ENCODE measurements at regions of chr4 and their contacts with region 1.

Region 1: DNA sequence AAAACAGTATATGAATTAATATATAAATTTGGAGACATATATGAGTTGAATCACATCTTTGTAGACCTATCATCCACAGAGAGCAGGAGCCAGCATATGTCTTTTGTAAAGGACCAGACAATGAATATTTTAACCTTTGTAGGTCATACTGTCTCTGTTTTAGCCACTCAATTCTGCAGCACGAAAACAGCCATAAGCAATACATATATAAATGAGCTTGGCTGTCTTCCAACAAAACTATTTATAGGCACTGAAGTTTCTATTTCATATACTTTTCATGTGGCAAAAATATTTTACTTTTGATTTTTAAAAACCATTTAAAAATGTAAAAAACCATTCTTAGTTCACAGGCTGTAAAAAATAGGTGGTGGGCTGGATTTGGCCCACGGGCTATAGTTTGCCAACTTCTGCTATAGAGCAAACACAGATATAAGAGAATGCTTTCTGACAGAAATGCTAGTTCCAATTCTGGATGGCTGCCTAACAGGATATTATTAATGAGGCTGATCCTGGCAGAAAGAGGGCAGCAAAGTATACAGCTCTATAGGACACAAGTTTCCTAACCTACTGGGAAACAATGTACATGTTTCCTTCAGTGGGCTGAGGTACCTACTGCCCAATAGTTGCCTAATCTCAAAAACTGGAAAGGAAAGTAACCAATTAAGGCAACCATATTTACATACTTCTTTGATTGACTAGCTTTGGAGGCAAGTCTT is 58.1 kb upstream of the UCP1 start:
- DNase-seq: no peak
- H3K4me3 ChIP-seq: no peak overlapping the region
- H3K27ac ChIP-seq: no peak overlapping the region
- H3K4me1 ChIP-seq: no peaks in the 10 kb centered on the region
- H3K27me3 ChIP-seq: no peaks in the 10 kb centered on the region
- CTCF ChIP-seq: no peak
- POLR2A ChIP-seq: no peak

Region 2: GRCh38 chr4:139619644-139620043 is 1007.2 kb before region 1 on chr4:
- intact Hi-C with region 1: loop called (anchors 5 kb)
- DNase-seq: no peak
- H3K4me3 ChIP-seq: no peak overlapping the region
- H3K27ac ChIP-seq: no peak overlapping the region
- H3K4me1 ChIP-seq: no peaks in the 10 kb centered on the region
- H3K27me3 ChIP-seq: no peaks in the 10 kb centered on the region
- CTCF ChIP-seq: peak in 1 of 3 donors; percentile 24
- POLR2A ChIP-seq: no peak

Measured in breast epithelium (tissue), 4 donors.